HepG2 (cell line): ENCODE measurements at regions of chr11 and their contacts with region 1.

Region 1: GRCh38 chr11:62841361-62842184 is 2.2 kb upstream of the WDR74 start:
- DNase-seq: peak; percentile 98
- ATAC-seq: peak; percentile 78
- H3K4me3 ChIP-seq: peak overlapping the region; percentile 85 to 100 (median 97)
- H3K27ac ChIP-seq: peak overlapping the region; percentile 98
- H3K4me1 ChIP-seq: peaks cover 43% of the 10 kb centered on the region
- H3K27me3 ChIP-seq: no peaks in the 10 kb centered on the region; a peak in 1 of 5 replicates
- CTCF ChIP-seq: peak; percentile 39
- EP300 ChIP-seq: peak in 1 of 2 experiments; percentile 74; a peak in 2 of 4 replicates
- POLR2A ChIP-seq: peak; percentile 99 to 100
- RAD21 ChIP-seq: peak; percentile 82

Region 2: DNA sequence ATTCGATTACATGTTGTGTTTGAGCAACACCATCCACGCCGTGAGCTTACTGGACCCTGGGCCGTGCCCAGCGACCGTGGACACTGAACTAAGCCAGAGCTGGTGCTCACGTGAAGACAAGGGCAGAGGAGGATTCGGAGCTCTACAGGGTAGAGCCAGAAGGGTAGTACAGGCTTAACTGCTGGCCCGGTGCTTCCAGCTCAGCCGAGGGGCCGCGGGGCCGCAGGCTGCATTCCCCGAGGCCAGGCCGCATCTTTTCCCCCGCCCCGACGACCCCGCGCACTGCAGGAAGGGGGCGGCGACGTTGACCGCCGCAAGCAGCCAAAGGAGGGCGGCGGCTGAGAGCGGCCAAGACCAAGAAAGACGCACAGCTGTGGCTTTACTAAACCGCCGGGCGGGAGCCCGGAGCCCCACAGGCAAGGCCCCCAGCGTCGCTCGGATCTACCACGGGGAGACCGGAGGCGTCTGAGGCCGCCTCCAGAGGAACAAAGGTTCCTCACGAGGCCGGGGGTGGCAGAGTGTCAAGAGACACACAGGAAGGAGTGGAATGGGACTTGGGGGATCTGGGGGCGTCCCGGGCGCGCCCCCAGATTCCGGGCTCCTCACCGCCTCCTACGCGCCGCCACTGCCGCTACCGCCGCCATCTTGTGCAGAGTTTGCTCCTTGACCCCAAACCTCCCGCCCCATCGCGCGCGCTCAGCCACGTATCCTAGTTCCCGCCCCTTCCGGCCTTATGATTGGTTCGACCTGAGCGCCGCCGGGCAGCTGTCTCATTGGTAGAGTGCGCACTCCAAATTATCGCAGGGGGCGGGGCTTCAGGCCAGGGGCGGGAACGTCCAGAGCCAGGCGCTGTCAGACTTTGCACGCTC is 195.4 kb before region 1 on chr11 and contains the start of gene GANAB:
- CTCF ChIA-PET with region 1: no interaction called
- POLR2A ChIA-PET with region 1: interaction called, 22 read pairs
- in situ Hi-C with region 1: no loop called
- intact Hi-C with region 1: no loop called
- DNase-seq: peak; percentile 95
- ATAC-seq: peak; percentile 94
- H3K4me3 ChIP-seq: peak within 1 kb of the TSS; percentile 86 to 96 (median 90)
- H3K27ac ChIP-seq: peak within 1 kb of the TSS; percentile 98
- H3K4me1 ChIP-seq: peaks cover 53% of the 10 kb centered on the region
- H3K27me3 ChIP-seq: no peaks in the 10 kb centered on the region
- CTCF ChIP-seq: no peak
- EP300 ChIP-seq: no peak; a peak in 1 of 4 replicates
- POLR2A ChIP-seq: peak; percentile 92 to 95
- RAD21 ChIP-seq: no peak
- total RNA-seq, gene GANAB: 50.8 and 99.5 TPM in 2 replicates

Region 3: DNA sequence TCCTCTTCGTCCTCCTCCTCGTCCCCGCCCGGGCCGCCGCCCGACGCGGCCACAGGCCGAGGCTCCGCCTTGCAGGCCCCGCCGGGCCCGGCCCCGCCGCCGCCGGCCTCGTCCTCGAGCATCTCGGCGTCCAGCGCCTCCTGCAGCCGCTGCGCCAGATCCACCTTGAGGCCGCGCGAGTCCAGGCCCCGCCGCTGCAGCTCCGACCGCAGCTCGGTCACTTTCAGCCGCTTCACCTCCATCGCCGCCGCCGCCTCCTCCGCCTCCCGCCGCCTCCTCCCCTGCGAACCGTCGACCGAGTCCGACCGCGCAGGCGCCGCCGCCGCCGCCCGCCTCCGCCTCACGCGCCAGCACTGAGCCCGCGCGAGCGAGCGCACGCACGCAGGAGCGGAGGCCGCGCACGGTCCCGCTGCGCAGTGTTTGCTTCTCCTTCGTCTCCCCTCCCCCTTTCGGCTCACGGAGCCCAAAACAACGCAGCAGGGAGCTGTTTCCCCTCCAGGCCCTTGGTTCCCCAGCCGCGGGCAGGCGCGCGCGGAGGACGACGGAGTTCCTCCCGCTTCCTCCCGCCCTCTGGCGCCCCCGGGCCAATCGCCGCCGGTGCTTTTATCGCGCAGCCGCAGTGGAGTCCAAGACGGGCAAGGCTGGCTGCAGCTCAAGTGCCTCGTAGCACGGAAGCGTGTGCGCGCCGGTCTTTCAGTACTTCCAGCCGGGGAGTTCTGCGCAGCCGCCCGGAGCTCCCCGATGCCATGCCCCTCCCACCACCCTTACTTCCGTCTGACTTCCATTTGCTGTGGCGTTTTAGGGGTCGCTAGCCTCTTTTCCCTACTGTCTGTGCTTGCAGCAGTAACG is 114.4 kb before region 1 on chr11 and contains the start of gene HNRNPUL2:
- CTCF ChIA-PET with region 1: no interaction called
- POLR2A ChIA-PET with region 1: interaction called, 80 read pairs
- in situ Hi-C with region 1: no loop called
- intact Hi-C with region 1: loop called (anchors 5 kb)
- DNase-seq: peak; percentile 97
- ATAC-seq: peak; percentile 89
- H3K4me3 ChIP-seq: peak within 1 kb of the TSS; percentile 91 to 100 (median 94)
- H3K27ac ChIP-seq: peak within 1 kb of the TSS; percentile 99
- H3K4me1 ChIP-seq: peaks cover 46% of the 10 kb centered on the region
- H3K27me3 ChIP-seq: peaks cover 0 to 3% of the 10 kb centered on the region in 2 experiments; a peak in 1 of 5 replicates
- CTCF ChIP-seq: peak; percentile 33
- EP300 ChIP-seq: no peak
- POLR2A ChIP-seq: peak; percentile 87 to 91
- RAD21 ChIP-seq: peak; percentile 53; the same call in 1 of the 2 replicates
- total RNA-seq, gene HNRNPUL2: 8.4 and 9.6 TPM in 2 replicates

Region 4: GRCh38 chr11:62794201-62794775 is 47.3 kb before region 1 on chr11:
- CTCF ChIA-PET with region 1: no interaction called
- POLR2A ChIA-PET with region 1: interaction called, 201 read pairs
- in situ Hi-C with region 1: no loop called
- intact Hi-C with region 1: no loop called
- DNase-seq: no peak
- ATAC-seq: no peak
- H3K4me3 ChIP-seq: no peak overlapping the region
- H3K27ac ChIP-seq: no peak overlapping the region
- H3K4me1 ChIP-seq: peaks cover 29% of the 10 kb centered on the region
- H3K27me3 ChIP-seq: no peaks in the 10 kb centered on the region
- CTCF ChIP-seq: no peak
- EP300 ChIP-seq: no peak
- POLR2A ChIP-seq: no peak
- RAD21 ChIP-seq: no peak

Region 5: GRCh38 chr11:62860835-62861563 is 19.4 kb after region 1 on chr11:
- CTCF ChIA-PET with region 1: no interaction called
- POLR2A ChIA-PET with region 1: interaction called, 362 read pairs
- in situ Hi-C with region 1: no loop called
- intact Hi-C with region 1: no loop called
- DNase-seq: no peak
- ATAC-seq: peak; percentile 48
- H3K4me3 ChIP-seq: peak overlapping the region in 1 of 3 experiments; percentile 20; a peak in 1 of 6 replicates
- H3K27ac ChIP-seq: peak overlapping the region; percentile 59
- H3K4me1 ChIP-seq: peaks cover 67% of the 10 kb centered on the region
- H3K27me3 ChIP-seq: no peaks in the 10 kb centered on the region; a peak in 1 of 5 replicates
- CTCF ChIP-seq: no peak
- EP300 ChIP-seq: no peak
- POLR2A ChIP-seq: no peak
- RAD21 ChIP-seq: no peak

Region 6: GRCh38 chr11:62958547-62959421 is 117.2 kb after region 1 on chr11:
- CTCF ChIA-PET with region 1: no interaction called
- POLR2A ChIA-PET with region 1: no interaction called
- in situ Hi-C with region 1: no loop called
- intact Hi-C with region 1: no loop called
- DNase-seq: no peak
- ATAC-seq: no peak
- H3K4me3 ChIP-seq: no peak overlapping the region
- H3K27ac ChIP-seq: no peak overlapping the region
- H3K4me1 ChIP-seq: no peaks in the 10 kb centered on the region
- H3K27me3 ChIP-seq: peaks cover 2 to 7% of the 10 kb centered on the region in 2 experiments; a peak in 2 of 5 replicates
- CTCF ChIP-seq: no peak
- EP300 ChIP-seq: no peak
- POLR2A ChIP-seq: no peak
- RAD21 ChIP-seq: no peak

Region 7: GRCh38 chr11:64094463-64095260 is 1253.1 kb after region 1 on chr11:
- CTCF ChIA-PET with region 1: no interaction called
- POLR2A ChIA-PET with region 1: no interaction called
- in situ Hi-C with region 1: no loop called
- intact Hi-C with region 1: no loop called
- DNase-seq: no peak
- ATAC-seq: no peak
- H3K4me3 ChIP-seq: no peak overlapping the region
- H3K27ac ChIP-seq: no peak overlapping the region
- H3K4me1 ChIP-seq: peaks cover 76% of the 10 kb centered on the region
- H3K27me3 ChIP-seq: no peaks in the 10 kb centered on the region
- CTCF ChIP-seq: 0 out of 2 replicates have a peak, but pooled peaks have one; percentile 14
- EP300 ChIP-seq: no peak
- POLR2A ChIP-seq: no peak
- RAD21 ChIP-seq: no peak